ENCODE measurements at regions of chr5 and their contacts with region 1.

Region 1: DNA sequence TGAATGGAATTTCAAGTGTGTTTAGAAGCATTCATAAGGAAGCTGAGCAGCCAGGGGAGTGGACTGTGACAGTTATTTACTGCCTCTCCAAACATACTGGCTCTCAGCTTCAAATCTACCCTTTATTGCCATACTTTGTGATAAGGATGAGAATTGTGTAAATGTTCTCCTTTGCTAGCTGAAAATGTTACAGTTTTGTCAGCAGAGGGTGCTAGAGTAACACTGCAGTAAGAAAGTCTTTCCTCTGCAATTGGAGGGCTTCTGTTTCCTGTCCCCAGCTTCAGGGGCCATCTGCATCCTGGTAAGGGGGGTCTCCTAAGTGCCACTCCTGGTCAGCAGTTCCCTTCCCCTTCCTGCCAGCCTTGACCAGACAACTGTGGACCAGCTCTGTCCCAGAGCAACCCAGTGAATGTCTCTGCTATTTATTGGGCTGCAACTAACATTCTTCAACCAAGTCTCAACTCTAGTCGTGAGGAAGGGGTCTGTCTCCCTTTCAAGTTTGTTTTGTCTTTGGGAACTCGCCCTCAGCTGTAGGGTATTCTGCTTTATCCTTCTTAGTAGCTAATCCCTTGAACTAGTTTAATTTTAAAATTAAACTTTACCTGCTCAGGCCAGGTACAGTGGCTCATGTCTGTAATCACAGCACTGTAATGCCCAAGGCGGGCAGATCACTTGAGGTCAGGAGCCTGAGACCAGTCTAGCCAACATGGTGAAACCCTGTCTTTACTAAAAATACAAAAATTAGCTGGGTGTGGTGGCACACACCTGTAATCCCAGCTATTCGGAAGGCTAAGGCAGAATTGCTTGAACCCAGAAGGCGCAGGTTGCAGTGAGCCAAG is 45.3 kb downstream of the RAPGEF6 start:
- DNase-seq: peak; percentile 24 to 30
- ATAC-seq: peak; percentile 99

Region 2: DNA sequence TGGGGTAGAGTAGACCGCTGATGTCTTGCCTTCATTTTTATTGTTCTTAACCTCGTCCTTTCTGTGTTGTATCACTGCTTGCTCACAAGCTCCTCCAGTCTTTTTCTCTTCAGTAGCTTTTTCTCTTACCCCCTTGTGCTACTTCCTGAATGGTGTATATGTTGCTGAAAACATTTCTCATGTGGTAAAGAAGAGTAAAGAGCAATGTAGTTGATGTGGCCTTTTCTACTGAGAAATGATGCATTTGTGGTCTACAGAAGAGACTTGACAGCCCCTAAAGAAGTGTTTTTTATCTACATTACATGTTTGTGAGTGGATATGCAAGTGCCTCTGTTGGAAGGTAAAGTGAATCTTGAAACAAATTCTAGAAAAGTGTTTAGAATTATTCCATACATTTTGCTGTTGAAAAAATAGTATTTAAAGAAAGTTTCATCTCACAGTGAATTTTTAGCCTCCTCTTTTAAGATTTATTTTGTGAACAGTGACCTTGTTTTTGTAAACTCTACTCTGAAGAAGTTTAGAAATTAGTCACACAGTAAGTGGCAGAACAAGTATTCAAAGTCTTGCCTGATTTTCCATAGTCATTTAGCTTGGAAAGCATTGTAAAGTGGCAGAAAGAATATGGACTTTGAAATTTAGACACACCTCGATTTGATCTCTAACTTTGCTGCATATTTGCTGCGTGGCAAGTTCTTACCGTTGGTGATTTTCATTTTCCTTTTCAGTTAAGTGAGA is 308.4 kb before region 1 on chr5:
- intact Hi-C with region 1: no loop called
- DNase-seq: no peak
- ATAC-seq: peak; percentile 79

Region 3: DNA sequence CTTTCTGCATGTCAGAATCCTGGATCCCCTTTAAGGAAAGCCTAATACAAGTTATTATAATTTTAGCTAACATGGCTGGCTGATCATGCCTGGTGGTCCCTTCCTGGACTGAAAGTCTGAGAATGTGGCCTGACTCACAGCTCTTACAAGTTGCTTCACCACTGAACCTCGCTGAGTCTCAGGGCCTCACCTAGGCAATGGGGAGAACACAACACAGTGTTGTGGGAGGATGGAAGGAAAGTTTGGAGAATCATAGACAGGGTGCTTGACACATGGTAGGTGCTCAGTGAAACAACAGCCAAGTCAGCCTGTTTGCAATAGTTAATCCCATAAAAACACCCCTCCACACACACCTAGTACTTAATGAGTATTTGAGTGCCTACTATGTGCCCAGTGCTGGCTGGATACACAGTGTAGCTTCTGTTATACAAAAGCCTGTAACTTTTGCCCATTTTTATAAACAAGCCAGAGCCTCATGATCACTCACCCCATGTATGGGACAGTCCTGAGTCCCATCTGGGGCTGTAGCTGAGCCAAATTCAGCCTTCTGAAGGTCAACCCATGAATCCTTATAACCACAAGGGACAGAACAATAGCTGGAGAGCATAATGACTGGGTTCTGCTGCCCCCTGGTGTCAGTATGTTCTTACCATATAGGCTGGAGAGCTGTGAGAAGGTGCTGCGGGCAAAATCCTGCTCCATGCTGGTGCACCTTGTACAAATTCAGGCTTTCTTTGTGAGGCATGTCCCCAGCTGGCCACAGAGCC is 417.9 kb after region 1 on chr5:
- intact Hi-C with region 1: loop called (anchors 2 to 10 kb)
- DNase-seq: peak; percentile 67 to 93
- ATAC-seq: peak; percentile 88

Measured in left colon (tissue), 2 donors.